H1 (cell line): ENCODE measurements at regions of chr19 and their contacts with region 1.

Region 1: DNA sequence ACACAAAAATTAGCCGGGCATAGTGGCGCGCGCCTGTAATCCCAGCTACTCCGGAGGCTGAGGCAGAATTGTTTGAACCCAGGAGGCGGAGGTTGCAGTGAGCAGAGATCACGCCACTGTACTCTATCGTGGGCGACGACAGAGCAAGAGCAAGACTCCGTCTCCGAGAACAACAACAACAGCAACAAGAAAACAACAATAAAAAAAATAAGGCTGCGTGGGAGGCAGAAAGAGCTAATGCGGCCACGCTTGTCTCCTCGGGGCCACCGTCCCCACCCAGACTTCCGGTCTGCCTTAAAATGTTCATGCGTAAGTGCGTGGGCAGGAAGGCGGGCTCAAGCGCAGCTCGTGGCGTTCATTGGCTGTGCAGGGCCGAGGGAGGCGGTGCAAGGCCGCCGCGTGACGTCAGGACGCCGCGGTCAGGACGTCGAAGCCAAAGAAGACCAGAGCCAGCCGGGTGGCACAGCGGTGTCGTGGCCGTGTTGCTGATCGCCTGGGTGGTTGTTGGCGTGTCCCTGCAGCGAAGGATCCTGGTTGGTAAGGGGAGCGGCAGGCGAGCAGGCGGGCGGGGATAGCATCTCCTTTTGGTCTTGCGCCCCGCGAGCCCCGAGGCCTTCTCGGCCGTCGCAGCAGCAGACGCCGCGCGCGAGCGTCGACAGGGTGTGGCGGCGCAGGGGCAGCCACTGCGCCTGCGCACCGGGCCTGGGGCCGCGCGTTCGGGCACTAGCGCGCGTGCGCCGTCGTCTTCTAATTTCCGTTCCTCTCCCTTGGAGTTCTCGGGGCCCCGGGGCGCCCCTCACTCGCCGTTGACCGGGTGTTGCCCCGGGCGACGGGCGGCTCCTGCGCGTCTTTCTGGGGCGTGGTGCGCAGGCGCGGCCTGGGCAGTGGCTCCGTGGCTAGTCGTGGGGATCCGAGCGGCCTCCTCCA is at the start of gene LENG8:
- DNase-seq: peak in 1 of 2 experiments; percentile 92
- H3K4me3 ChIP-seq: peak within 1 kb of the TSS; percentile 61 to 90 (median 84)
- H3K27ac ChIP-seq: peak within 1 kb of the TSS; percentile 89
- H3K4me1 ChIP-seq: peaks cover 0 to 2% (median under 1%) of the 10 kb centered on the region in 4 experiments; a peak in 5 of 7 replicates
- H3K27me3 ChIP-seq: no peaks in the 10 kb centered on the region
- CTCF ChIP-seq: no peak
- EP300 ChIP-seq: no peak
- POLR2A ChIP-seq: peak in 1 of 2 experiments; percentile 92; a peak in 2 of 3 replicates
- RAD21 ChIP-seq: no peak
- total RNA-seq, gene LENG8: 108 TPM in 2 replicates

Region 2: DNA sequence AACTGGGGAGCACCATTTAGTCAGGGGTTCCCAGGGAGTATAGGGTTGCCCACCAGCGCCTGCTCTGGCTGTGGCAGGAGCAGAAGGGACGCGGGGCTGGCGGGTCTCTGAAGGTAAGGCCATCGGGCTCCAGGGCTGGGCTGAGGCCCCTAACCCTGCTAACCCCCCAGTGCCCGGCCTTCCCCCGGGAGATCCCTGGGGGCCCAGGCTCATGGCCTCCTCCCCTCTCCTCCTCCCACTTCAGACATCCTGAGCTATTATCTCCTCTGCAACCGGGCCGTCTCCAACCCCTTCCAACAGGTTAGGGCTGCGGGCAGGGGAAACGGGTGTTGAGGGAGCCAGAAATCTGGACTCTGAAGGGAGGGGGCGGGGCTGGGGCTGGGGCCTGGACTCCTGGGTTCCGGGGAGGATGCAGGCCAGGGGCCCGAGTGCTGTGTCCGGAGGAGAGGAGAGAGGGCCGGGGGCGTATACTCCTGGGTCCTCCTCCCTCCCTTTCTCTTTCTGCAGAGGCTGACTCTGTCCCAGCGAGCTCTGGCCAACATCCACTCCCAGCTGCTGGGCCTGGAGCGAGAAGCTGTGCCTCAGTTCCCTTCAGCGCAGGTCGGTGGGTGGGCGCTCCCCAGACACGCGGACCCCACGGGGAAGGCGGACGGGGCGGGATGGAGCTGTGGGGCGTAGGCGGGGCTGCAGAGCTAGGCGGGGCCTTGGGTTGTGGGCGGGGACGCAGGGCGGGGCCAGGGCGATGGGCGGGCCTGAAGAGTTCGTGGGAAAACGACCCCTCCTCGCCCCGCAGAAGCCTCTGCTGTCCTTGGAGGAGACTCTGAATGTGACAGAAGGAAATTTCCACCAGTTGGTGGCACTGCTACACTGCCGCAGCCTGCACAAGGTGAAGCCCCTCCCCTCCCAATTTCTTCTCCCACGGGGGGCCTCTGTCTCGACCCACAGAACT is 18.5 kb before region 1 on chr19:
- CTCF ChIA-PET with region 1: interaction called, 4 read pairs
- POLR2A ChIA-PET with region 1: interaction called, 30 read pairs
- DNase-seq: peak in 1 of 2 experiments; percentile 94
- H3K4me3 ChIP-seq: peak overlapping the region; percentile 37 to 67 (median 44)
- H3K27ac ChIP-seq: no peak overlapping the region
- H3K4me1 ChIP-seq: peaks cover 0 to 30% (median 12%) of the 10 kb centered on the region in 4 experiments; a peak in 6 of 7 replicates
- H3K27me3 ChIP-seq: peaks cover 0 to 3% (median 0%) of the 10 kb centered on the region in 4 experiments; a peak in 2 of 7 replicates
- CTCF ChIP-seq: peak; percentile 37 to 46 (median 42); a peak in 3 of 4 replicates
- EP300 ChIP-seq: no peak
- POLR2A ChIP-seq: 0 out of 3 replicates have a peak, but pooled peaks of 1 of the 2 experiments have one; percentile 13
- RAD21 ChIP-seq: peak; percentile 49 to 55

Region 3: DNA sequence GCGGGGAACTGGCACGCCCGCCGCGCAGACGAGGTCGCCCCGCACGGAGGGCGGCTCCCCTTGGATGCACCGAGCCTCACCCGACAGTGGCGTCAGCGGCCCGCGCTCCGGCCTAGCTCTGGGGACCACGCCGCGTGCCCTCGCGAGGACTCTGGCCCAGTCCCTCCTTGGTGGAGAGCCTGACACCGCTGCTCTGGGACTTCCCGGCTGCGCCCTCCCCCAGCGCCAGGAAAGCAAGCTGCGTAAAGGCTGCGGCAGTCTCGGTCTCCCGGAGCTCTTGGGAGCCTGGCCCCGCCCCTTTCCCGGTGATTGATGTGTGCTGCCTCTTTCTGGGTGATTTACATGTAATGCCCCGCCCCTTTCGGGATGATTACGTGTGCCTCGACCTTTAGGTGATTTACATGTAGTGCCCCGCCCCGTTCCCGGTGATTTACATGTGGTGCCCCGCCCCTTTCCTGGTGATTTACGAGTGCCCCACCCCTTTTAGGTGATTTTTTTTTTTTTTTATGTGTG is 14.6 kb after region 1 on chr19 and contains the start of gene LENG9:
- CTCF ChIA-PET with region 1: interaction called, 3 read pairs
- POLR2A ChIA-PET with region 1: interaction called, 129 read pairs
- DNase-seq: peak; percentile 92 to 98
- H3K4me3 ChIP-seq: peak within 1 kb of the TSS; percentile 68 to 87 (median 80)
- H3K27ac ChIP-seq: peak within 1 kb of the TSS; percentile 86
- H3K4me1 ChIP-seq: peaks cover 0 to 8% (median 5%) of the 10 kb centered on the region in 4 experiments; a peak in 5 of 7 replicates
- H3K27me3 ChIP-seq: peaks cover 0 to 11% (median 5%) of the 10 kb centered on the region in 4 experiments; a peak in 5 of 7 replicates
- CTCF ChIP-seq: no peak
- EP300 ChIP-seq: no peak
- POLR2A ChIP-seq: peak; percentile 43 to 57; a peak in 2 of 3 replicates
- RAD21 ChIP-seq: no peak
- total RNA-seq, gene LENG9: 3.9 and 4.0 TPM in 2 replicates

Region 4: GRCh38 chr19:54523403-54523802 is 74.4 kb after region 1 on chr19:
- CTCF ChIA-PET with region 1: no interaction called
- POLR2A ChIA-PET with region 1: no interaction called
- DNase-seq: no peak
- H3K4me3 ChIP-seq: no peak overlapping the region
- H3K27ac ChIP-seq: no peak overlapping the region
- H3K4me1 ChIP-seq: no peaks in the 10 kb centered on the region
- H3K27me3 ChIP-seq: no peaks in the 10 kb centered on the region
- CTCF ChIP-seq: no peak
- EP300 ChIP-seq: no peak
- POLR2A ChIP-seq: no peak
- RAD21 ChIP-seq: no peak